Naive thymus-derived CD8-positive, alpha-beta T cell (primary cell): ENCODE measurements at regions of chr20 and their contacts with region 1.

Region 1: DNA sequence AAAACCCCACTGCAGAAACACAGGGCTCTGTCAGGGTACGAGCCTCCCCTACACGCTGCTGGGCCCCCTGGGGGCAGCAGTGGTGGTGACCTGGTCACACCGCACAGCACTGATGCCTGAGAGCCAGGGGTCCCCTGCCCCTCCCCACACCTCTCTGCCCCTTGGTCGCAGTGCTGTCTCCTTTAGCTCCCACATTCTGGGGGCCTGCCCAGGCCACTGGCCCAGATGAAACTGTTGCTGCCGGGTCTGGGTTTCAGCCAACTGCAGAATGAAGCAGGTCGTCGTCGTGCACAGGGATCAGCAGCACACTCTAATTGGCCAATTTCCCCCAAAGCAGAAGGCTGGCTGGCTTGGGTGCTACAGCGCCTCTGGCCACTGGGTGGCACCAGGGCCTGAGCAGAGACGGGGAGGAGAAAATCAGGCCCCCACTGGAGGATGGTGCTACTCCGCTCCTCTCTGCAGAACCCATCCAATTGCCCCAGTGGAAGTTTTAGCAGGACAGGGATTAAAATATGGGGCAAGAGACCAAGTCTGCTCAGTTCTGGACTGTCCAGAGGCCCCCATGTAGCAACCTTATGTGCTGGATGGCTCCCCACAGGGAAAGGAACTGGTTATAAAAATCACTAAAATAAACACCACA is 26.1 kb downstream of the DIDO1 start:
- DNase-seq: peak; percentile 63 to 87 (median 77)
- ATAC-seq: peak; percentile 88 to 93
- H3K4me3 Mint-ChIP-seq: peak overlapping the region in 9 of 10 donors; percentile 54 to 85 (median 76)
- H3K27ac Mint-ChIP-seq: peak overlapping the region; percentile 33 to 96 (median 91)
- H3K4me1 Mint-ChIP-seq: peaks cover 18 to 40% (median 34%) of the 10 kb centered on the region in 4 donors
- H3K27me3 Mint-ChIP-seq: no peaks in the 10 kb centered on the region

Region 2: DNA sequence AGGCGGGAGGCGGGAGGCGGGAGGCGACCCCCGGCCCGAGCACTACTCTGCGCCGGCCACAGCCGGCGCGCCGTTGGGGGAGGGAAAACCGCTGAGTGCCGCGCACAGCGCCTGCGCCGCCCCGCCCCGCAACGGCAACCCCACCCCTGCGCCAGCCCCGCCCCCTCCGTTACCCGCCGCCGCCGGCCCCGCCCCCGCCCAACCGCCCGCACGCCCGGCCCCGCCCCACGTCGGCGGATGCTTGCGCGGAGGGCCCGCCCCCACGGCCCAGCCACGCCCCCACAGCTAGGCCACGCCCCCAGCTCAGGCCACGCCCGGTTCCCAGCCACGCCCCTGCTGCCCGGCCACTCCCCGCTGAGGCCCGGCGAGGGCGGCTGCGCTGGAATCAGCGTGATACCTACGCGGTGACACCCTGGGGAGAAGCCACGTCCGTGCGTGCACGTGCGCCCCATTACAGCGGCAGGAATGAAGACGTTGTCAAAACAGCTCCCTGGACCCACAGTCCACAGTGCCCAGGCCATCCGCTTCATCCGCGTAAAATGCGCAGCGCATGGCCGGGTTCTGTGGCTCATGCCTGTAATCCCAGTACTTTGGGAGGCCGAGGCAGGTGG is 38.3 kb before region 1 on chr20 and contains the start of gene TCFL5:
- POLR2A ChIA-PET with region 1: interaction called, 11 read pairs
- DNase-seq: peak; percentile 85 to 98 (median 94)
- ATAC-seq: peak; percentile 80 to 87
- H3K4me3 Mint-ChIP-seq: peak within 1 kb of the TSS; percentile 54 to 88 (median 72)
- H3K27ac Mint-ChIP-seq: peak within 1 kb of the TSS in 9 of 10 donors; percentile 37 to 94 (median 87)
- H3K4me1 Mint-ChIP-seq: peaks cover 9 to 29% (median 22%) of the 10 kb centered on the region in 4 donors
- H3K27me3 Mint-ChIP-seq: no peaks in the 10 kb centered on the region
- polyA plus RNA-seq, gene TCFL5: 1.0 to 2.1 (median 1.5) TPM

Region 3: GRCh38 chr20:62921119-62921687 is 21.0 kb after region 1 on chr20:
- POLR2A ChIA-PET with region 1: interaction called, 12 read pairs
- DNase-seq: peak; percentile 45 to 77 (median 60)
- ATAC-seq: peak; percentile 54 to 60
- H3K4me3 Mint-ChIP-seq: peak overlapping the region; percentile 80 to 92 (median 88)
- H3K27ac Mint-ChIP-seq: peak overlapping the region; percentile 82 to 96 (median 90)
- H3K4me1 Mint-ChIP-seq: peaks cover 47 to 88% (median 83%) of the 10 kb centered on the region in 4 donors
- H3K27me3 Mint-ChIP-seq: no peaks in the 10 kb centered on the region

Region 4: DNA sequence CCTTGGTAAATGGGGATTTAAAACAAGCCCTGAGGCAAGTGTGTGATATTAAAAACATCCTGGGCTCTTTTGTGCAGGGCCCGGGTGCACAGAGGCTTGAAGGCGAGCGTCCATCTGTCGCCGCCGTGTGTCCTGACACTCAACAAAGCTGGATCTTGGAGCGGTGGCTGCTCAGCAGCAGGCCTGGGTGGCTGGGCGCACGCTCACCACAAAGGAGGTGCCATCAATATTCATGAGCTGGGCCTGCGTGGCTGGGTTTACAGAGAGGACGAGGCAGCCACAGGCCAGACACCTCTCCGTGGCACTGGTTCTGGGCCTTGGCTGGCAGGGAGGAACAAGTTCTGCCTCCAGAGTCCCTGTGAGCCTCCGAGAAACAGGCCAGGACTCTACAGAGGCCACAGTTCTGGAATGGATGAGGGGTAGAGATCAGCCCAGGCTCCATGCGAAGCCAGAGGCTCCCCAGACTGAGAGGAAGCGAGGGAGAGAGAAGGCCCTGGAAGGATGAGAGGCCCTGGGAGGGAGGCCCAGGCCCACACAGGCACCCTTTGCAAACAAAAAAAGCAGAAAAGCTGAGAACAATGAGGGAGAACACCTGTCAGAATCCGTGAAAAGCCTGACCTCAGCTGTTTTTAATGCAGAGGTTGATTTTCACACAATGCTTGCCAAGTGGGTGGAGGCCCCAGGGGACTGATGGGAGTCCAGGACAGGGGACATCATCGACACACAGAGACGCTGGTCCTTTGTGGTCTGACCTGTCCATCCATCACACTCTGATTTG is 84.7 kb after region 1 on chr20:
- POLR2A ChIA-PET with region 1: no interaction called
- DNase-seq: no peak
- ATAC-seq: no peak
- H3K4me3 Mint-ChIP-seq: peak overlapping the region in 1 of 10 donors; percentile 10
- H3K27ac Mint-ChIP-seq: peak overlapping the region in 2 of 10 donors; percentile 19 to 62
- H3K4me1 Mint-ChIP-seq: peaks cover 5 to 32% (median 25%) of the 10 kb centered on the region in 4 donors
- H3K27me3 Mint-ChIP-seq: peaks cover 0 to 28% (median 4%) of the 10 kb centered on the region in 5 donors